ENCODE measurements at regions of chr5 and their contacts with region 1.

Region 1: GRCh38 chr5:75734913-75735789 is 17.9 kb upstream of the POC5 start:
- DNase-seq: peak; percentile 52
- ATAC-seq: peak; percentile 96
- H3K4me3 Mint-ChIP-seq: no peak overlapping the region
- H3K27ac Mint-ChIP-seq: no peak overlapping the region
- H3K4me1 Mint-ChIP-seq: no peaks in the 10 kb centered on the region
- H3K27me3 Mint-ChIP-seq: no peaks in the 10 kb centered on the region
- CTCF ChIP-seq: no peak

Region 2: DNA sequence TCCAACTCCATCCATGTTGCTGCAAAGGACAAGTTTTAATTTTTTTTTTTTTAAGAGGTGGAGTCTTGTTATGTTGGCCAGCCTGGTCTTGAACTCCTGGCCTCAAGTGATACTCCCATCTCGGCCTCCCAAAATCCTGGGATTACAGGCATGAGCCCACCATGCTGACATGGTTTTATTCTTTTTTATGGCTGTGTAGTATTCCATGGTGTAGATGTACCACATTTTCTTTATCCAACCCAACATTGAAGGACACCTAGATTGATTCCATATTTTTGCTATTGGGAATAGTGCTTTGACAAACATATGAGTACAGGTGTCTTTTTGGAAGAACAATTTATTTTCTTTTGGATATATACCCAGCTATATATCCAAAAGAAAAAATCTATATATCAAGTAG is 11.8 kb before region 1 on chr5:
- CTCF ChIA-PET with region 1: no interaction called
- POLR2A ChIA-PET with region 1: no interaction called
- DNase-seq: no peak
- ATAC-seq: no peak
- H3K4me3 Mint-ChIP-seq: no peak overlapping the region
- H3K27ac Mint-ChIP-seq: no peak overlapping the region
- H3K4me1 Mint-ChIP-seq: peaks cover 11% of the 10 kb centered on the region
- H3K27me3 Mint-ChIP-seq: peaks cover 3% of the 10 kb centered on the region; the same call in 1 of the 2 replicates
- CTCF ChIP-seq: no peak

Region 3: GRCh38 chr5:75885849-75886598 is 150.9 kb after region 1 on chr5:
- CTCF ChIA-PET with region 1: interaction called, 14 read pairs
- POLR2A ChIA-PET with region 1: no interaction called
- DNase-seq: peak; percentile 34
- ATAC-seq: peak; percentile 94
- H3K4me3 Mint-ChIP-seq: no peak overlapping the region
- H3K27ac Mint-ChIP-seq: 0 out of 2 replicates have a peak overlapping the region, but pooled peaks have one; percentile 2
- H3K4me1 Mint-ChIP-seq: 0 out of 2 replicates have a peak, but pooled peaks cover 4% of the 10 kb centered on the region
- H3K27me3 Mint-ChIP-seq: no peaks in the 10 kb centered on the region
- CTCF ChIP-seq: no peak

Measured in WTC11 (cell line).